Calu3 (cell line): ENCODE measurements at regions of chr5 and their contacts with region 1.

Region 1: GRCh38 chr5:97162045-97162444 is 19.6 kb upstream of the LIX1 start:
- DNase-seq: peak; percentile 74
- H3K4me3 Mint-ChIP-seq: no peak overlapping the region
- H3K27ac Mint-ChIP-seq: no peak overlapping the region
- H3K4me1 Mint-ChIP-seq: peaks cover 21% of the 10 kb centered on the region
- H3K27me3 Mint-ChIP-seq: no peaks in the 10 kb centered on the region
- CTCF ChIP-seq: peak; percentile 92

Region 2: GRCh38 chr5:96765043-96765442 is 397.0 kb before region 1 on chr5:
- CTCF ChIA-PET with region 1: no interaction called
- intact Hi-C with region 1: loop called (anchors 5 kb)
- DNase-seq: no peak
- H3K4me3 Mint-ChIP-seq: no peak overlapping the region
- H3K27ac Mint-ChIP-seq: peak overlapping the region; percentile 80
- H3K4me1 Mint-ChIP-seq: peaks cover 9% of the 10 kb centered on the region
- H3K27me3 Mint-ChIP-seq: no peaks in the 10 kb centered on the region
- CTCF ChIP-seq: no peak

Region 3: DNA sequence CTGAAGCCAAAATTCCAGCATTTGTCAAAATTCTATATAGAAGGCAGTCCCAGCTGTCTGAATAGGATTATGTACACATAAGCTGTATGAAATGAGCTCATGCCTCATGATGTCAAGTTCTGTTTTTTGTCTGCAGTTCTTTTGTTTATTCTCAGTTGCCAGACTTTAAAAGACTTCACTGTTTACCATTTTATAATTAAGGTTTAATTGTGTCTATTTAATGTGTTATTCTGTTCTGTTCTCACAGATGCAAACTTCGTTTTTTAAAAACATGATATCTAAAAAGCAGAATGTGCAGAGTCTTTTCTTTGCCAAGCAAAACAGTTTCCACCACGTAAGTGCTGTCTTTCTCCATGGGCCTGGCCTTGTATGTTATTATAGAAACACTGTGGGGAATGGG is 385.4 kb before region 1 on chr5:
- CTCF ChIA-PET with region 1: no interaction called
- intact Hi-C with region 1: no loop called
- DNase-seq: no peak
- H3K4me3 Mint-ChIP-seq: no peak overlapping the region
- H3K27ac Mint-ChIP-seq: no peak overlapping the region
- H3K4me1 Mint-ChIP-seq: peaks cover 15% of the 10 kb centered on the region
- H3K27me3 Mint-ChIP-seq: no peaks in the 10 kb centered on the region
- CTCF ChIP-seq: no peak

Region 4: GRCh38 chr5:96881511-96882115 is 280.4 kb before region 1 on chr5:
- CTCF ChIA-PET with region 1: no interaction called
- intact Hi-C with region 1: loop called (anchors 5 kb)
- DNase-seq: no peak
- H3K4me3 Mint-ChIP-seq: no peak overlapping the region
- H3K27ac Mint-ChIP-seq: peak overlapping the region; percentile 86
- H3K4me1 Mint-ChIP-seq: peaks cover 33% of the 10 kb centered on the region
- H3K27me3 Mint-ChIP-seq: no peaks in the 10 kb centered on the region
- CTCF ChIP-seq: no peak

Region 5: DNA sequence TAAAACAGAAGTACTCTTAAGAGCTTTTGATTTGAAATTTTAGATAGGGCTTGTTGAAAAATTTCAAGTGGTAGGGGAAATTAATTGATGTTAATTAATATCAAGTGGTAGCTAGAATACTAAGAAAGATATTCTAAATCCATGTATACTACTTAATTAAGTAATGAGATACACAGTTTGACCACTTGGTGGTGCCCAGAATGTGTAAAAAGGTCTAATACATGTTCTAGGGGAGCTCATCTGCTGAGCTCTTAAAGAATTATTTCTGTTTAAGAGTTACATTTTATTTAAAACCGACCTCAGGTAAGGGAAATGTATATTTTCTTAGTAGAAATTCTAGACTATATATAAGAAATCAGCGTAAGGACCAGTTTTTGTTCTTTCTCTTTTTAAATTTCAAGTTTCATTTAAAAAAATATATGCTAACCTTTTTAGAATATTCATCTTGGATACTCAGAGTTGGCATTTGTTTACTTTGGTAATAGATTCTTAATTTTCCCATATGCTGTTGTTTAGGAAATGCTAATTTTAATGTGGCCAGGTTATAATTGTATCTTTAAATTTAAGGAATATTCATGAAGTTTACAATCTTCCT is 164.7 kb before region 1 on chr5:
- CTCF ChIA-PET with region 1: interaction called, 6 read pairs
- intact Hi-C with region 1: loop called (anchors 1 kb)
- DNase-seq: peak; percentile 13
- H3K4me3 Mint-ChIP-seq: no peak overlapping the region
- H3K27ac Mint-ChIP-seq: no peak overlapping the region
- H3K4me1 Mint-ChIP-seq: no peaks in the 10 kb centered on the region
- H3K27me3 Mint-ChIP-seq: no peaks in the 10 kb centered on the region
- CTCF ChIP-seq: no peak

Region 6: GRCh38 chr5:97194992-97195391 is 32.9 kb after region 1 on chr5:
- CTCF ChIA-PET with region 1: no interaction called
- intact Hi-C with region 1: no loop called
- DNase-seq: no peak
- H3K4me3 Mint-ChIP-seq: no peak overlapping the region
- H3K27ac Mint-ChIP-seq: no peak overlapping the region
- H3K4me1 Mint-ChIP-seq: peaks cover 17% of the 10 kb centered on the region
- H3K27me3 Mint-ChIP-seq: no peaks in the 10 kb centered on the region
- CTCF ChIP-seq: no peak